Right ventricle myocardium inferior (tissue), 1 donor: ENCODE measurements at regions of chr17 and their contacts with region 1.

Region 1: DNA sequence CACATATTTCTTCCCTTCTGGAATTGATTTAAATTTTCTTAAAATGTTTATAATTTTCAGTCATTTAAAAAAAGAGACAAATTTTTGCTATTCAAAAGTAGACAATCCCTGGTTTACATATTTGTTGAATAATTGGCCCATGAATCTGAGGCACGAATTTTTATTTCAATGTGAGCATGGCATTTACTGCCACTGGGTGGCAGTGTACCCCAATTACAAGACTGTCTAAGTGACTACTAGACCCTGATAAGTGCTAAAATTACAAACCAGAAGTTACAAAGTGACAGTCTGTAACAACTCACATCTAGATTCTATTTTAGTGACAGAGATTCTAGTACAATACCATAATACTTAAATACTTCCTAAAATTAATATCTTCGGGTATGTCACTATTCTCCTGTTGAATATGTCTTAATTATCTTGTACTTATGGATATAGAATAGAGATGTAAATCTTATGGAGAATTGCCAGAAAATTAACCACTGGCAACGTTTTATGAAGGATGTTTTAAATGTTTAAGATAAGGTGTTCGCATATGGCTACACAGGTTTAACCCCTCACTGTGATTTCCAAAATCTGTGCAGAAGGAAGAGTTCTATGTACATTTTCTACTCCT is 235.8 kb downstream of the MAP2K4 start:
- DNase-seq: no peak
- ATAC-seq: peak; percentile 65

Region 2: DNA sequence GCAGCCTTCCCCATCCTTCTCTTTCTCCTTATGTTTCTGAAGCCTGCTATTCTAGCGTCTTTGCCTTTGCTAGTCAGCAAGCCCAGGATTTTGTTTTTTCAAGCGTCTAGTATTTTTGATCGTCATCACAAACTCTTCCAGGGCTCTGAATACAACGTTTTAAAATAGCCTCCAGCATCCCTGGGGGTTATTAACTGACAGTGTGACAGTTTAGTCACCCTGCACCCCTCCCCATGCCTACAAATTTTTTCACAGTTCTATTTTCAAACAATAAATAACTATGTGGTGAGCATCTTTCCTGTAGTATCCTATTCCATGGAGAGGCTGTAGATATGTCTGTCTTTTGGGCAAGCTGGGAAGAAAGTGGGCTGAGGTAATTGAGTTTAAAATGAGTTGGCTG is 45.1 kb after region 1 on chr17:
- intact Hi-C with region 1: no loop called
- DNase-seq: no peak
- ATAC-seq: no peak

Region 3: GRCh38 chr17:12415031-12415430 is 158.5 kb after region 1 on chr17:
- intact Hi-C with region 1: no loop called
- DNase-seq: no peak
- ATAC-seq: no peak

Region 4: DNA sequence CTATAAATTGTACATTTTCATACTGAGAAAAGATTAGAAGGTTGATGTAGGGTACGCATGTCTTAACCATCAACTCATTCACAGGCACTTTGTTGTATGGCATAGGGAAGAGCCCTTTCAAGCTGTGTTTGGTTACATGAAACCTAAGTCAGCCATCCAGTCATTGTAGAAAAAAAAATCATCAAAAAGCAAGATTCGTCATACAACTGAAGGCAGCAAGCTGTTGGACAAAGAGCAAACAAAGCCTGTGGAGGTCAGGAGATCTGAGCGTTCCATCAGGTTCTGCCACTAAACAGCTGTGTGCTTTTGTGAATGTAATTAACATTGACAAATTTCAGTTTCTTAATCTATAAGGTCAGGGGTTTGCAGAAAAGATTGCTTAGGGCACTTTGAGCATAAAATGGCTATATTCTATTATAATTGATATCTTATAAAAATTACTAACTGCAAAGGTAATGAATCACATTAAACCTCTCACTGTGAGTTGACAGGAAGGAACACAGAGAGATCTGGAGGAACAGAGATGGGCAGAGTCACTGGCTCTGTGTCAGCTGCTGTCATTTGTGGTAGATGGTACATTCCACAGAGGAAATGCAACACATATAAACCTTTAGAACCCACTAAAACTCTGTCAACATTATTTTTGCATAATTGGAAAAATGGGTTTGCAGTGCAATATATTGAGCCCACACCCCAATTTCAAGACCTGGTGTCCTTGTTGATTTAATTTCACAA is 342.9 kb after region 1 on chr17:
- intact Hi-C with region 1: no loop called
- DNase-seq: no peak
- ATAC-seq: no peak

Region 5: DNA sequence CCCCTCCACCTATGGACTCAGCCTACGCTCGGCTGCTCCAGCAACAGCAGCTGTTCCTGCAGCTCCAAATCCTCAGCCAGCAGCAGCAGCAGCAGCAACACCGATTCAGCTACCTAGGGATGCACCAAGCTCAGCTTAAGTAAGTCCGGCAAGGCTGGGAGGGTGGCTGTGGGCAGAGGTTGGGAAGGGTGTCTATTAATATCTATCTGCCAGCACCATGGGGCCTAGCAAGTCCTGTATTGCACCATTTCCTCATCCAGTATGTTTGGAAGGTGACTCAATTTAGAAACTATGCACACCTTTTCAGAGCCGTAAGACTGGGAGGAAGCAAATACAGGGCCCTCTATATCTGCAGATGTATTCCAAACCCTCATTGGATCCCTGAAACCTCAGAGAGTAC is 487.8 kb after region 1 on chr17:
- intact Hi-C with region 1: loop called (anchors 5 kb)
- DNase-seq: no peak
- ATAC-seq: peak; percentile 87